Naive thymus-derived CD4-positive, alpha-beta T cell (primary cell): ENCODE measurements at regions of chr19 and their contacts with region 1.

Region 1: DNA sequence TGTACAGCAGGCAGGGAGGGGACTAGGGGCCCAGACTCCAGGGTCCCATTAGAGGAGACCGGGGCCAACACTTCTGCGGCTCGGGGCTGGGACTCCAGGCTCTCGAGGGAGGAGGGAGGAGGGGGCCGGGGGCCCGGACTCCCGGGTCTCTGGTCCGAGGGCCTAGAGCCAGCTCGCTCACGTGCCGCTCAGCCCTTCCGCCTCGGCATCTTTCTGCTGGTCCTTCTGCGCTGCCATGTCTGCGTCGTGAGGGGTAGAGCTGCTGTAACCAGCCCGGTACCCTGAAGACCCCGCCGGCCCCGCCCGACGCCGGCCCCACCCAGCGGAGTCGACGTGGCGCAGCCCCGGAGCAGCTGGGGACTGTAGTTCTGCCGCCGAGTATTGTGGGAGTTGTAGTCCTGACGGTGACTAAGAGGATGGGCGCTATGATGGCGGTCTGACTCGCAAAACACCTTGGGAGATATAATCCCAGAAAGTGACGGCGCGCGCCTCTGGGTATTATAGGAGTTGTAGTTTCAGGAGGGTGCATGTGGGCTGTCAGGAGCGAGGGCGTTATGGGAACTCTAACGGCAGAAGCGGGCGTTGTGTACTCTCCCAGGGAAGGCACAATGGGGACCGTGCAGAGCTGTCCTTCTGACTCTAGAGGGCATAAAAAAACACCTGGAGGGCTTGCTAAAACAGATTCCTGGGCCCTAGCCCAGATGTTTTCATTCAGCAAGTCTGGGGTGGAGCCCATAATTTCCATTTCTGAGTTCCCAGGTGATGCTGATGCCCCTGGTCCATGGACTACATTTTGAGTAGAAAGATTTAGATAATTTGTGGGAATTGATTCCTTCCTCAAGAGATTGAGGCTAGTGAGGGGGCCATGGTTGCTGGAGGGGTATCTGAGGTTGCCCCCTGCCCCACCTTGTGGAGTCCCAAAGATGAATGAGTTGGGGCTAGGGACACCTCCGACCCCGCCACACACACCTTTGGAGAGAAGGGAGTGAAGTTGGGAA is at the start of gene RABAC1:
- DNase-seq: peak; percentile 67 to 91 (median 86)
- ATAC-seq: peak; percentile 95
- H3K4me3 ChIP-seq: peak within 1 kb of the TSS; percentile 78
- H3K4me3 Mint-ChIP-seq: peak within 1 kb of the TSS; percentile 80 to 99 (median 91)
- H3K27ac ChIP-seq: peak within 1 kb of the TSS; percentile 81
- H3K27ac Mint-ChIP-seq: peak within 1 kb of the TSS; percentile 74 to 94 (median 90)
- H3K4me1 ChIP-seq: peaks cover 8 to 9% of the 10 kb centered on the region in 2 donors
- H3K4me1 Mint-ChIP-seq: peaks cover 17 to 22% (median 18%) of the 10 kb centered on the region in 7 donors
- H3K27me3 ChIP-seq: no peaks in the 10 kb centered on the region
- H3K27me3 Mint-ChIP-seq: no peaks in the 10 kb centered on the region
- total RNA-seq, gene RABAC1: 70.4 to 90.9 (median 78.1) TPM

Region 2: GRCh38 chr19:41945135-41945766 is 14.1 kb before region 1 on chr19:
- CTCF ChIA-PET with region 1: no interaction called
- POLR2A ChIA-PET with region 1: interaction called, 28 read pairs
- intact Hi-C with region 1: no loop called
- DNase-seq: peak; percentile 45 to 90 (median 82)
- ATAC-seq: peak; percentile 96
- H3K4me3 ChIP-seq: no peak overlapping the region
- H3K4me3 Mint-ChIP-seq: peak overlapping the region in 9 of 10 donors; percentile 39 to 77 (median 60)
- H3K27ac ChIP-seq: peak overlapping the region; percentile 57
- H3K27ac Mint-ChIP-seq: peak overlapping the region; percentile 84 to 100 (median 96)
- H3K4me1 ChIP-seq: peaks cover 23 to 41% of the 10 kb centered on the region in 2 donors
- H3K4me1 Mint-ChIP-seq: peaks cover 27 to 50% (median 41%) of the 10 kb centered on the region in 7 donors
- H3K27me3 ChIP-seq: no peaks in the 10 kb centered on the region
- H3K27me3 Mint-ChIP-seq: peaks cover 0 to 16% (median 4%) of the 10 kb centered on the region in 5 donors

Region 3: GRCh38 chr19:41993612-41994483 is 34.5 kb after region 1 on chr19 and contains the start of gene ATP1A3:
- CTCF ChIA-PET with region 1: no interaction called
- POLR2A ChIA-PET with region 1: no interaction called
- intact Hi-C with region 1: loop called (anchors 1 to 5 kb)
- DNase-seq: peak; percentile 21 to 69 (median 53)
- ATAC-seq: peak; percentile 86
- H3K4me3 ChIP-seq: peak within 1 kb of the TSS; percentile 74
- H3K4me3 Mint-ChIP-seq: peak within 1 kb of the TSS; percentile 79 to 92 (median 87)
- H3K27ac ChIP-seq: peak within 1 kb of the TSS; percentile 23
- H3K27ac Mint-ChIP-seq: peak within 1 kb of the TSS in 7 of 9 donors; percentile 24 to 82 (median 51)
- H3K4me1 ChIP-seq: peaks cover 6 to 12% of the 10 kb centered on the region in 2 donors
- H3K4me1 Mint-ChIP-seq: peaks cover 18 to 42% (median 38%) of the 10 kb centered on the region in 7 donors
- H3K27me3 ChIP-seq: peaks cover 3 to 16% of the 10 kb centered on the region in 2 donors
- H3K27me3 Mint-ChIP-seq: peaks cover 33 to 48% (median 35%) of the 10 kb centered on the region in 5 donors
- total RNA-seq, gene ATP1A3: 1.3 to 5.0 (median 2.9) TPM

Region 4: GRCh38 chr19:42032431-42032830 is 73.1 kb after region 1 on chr19:
- CTCF ChIA-PET with region 1: interaction called, 4 read pairs
- POLR2A ChIA-PET with region 1: interaction called, 4 read pairs
- intact Hi-C with region 1: loop called (anchors 1 to 2 kb)
- DNase-seq: no peak
- ATAC-seq: no peak
- H3K4me3 ChIP-seq: no peak overlapping the region
- H3K4me3 Mint-ChIP-seq: no peak overlapping the region
- H3K27ac ChIP-seq: no peak overlapping the region
- H3K27ac Mint-ChIP-seq: peak overlapping the region in 1 of 9 donors; percentile 88
- H3K4me1 ChIP-seq: no peaks in the 10 kb centered on the region
- H3K4me1 Mint-ChIP-seq: peaks cover 0 to 8% (median 0%) of the 10 kb centered on the region in 7 donors
- H3K27me3 ChIP-seq: no peaks in the 10 kb centered on the region
- H3K27me3 Mint-ChIP-seq: peaks cover 0 to 11% (median 6%) of the 10 kb centered on the region in 5 donors

Region 5: DNA sequence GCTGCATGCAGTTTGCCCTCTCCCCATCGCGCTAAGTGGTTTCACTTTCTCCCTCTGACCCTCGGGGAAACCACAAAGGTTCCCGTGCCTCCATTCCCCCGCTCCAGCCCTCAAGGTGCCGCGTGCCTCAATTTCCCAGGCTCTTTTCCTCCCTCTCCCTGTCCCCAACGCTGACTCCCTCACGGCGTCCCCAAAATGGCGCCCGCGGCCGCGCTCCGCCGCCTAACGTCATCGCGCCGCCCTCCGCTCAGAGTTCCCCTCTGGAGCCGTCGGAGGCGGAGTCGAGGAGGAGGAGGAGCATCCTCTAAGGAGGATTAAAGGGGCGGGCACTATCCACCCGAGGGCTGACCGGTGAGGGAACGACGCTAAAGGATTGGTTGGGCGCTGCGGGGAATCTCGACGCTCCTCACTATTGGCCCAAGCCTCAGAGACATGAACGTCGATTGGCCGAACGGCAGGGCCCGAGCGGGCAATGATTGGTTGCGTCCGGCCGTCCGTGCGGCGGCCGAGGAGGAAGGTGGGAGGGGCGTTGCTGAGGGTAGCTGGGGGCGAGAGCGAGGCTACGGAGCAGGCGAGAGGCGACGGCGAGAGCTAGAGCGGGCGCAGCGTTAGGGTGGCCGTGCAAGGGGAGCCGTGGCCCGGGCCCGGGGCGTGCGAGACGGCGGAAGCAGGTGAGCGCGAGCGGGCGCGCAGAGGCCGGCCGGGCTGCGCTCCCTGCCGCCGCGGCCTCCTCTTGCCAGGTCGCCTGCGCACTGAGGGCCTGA is 116.4 kb after region 1 on chr19 and contains the start of gene ZNF574:
- CTCF ChIA-PET with region 1: no interaction called
- POLR2A ChIA-PET with region 1: no interaction called
- intact Hi-C with region 1: loop called (anchors 1 to 2 kb)
- DNase-seq: peak; percentile 91 to 99 (median 98)
- ATAC-seq: peak; percentile 98
- H3K4me3 ChIP-seq: peak within 1 kb of the TSS; percentile 70
- H3K4me3 Mint-ChIP-seq: peak within 1 kb of the TSS; percentile 92 to 100 (median 98)
- H3K27ac ChIP-seq: peak within 1 kb of the TSS; percentile 97
- H3K27ac Mint-ChIP-seq: peak within 1 kb of the TSS; percentile 99 to 100 (median 100)
- H3K4me1 ChIP-seq: peaks cover 19 to 24% of the 10 kb centered on the region in 2 donors
- H3K4me1 Mint-ChIP-seq: peaks cover 26 to 44% (median 38%) of the 10 kb centered on the region in 7 donors
- H3K27me3 ChIP-seq: no peaks in the 10 kb centered on the region
- H3K27me3 Mint-ChIP-seq: peaks cover 0 to 13% (median 0%) of the 10 kb centered on the region in 5 donors
- total RNA-seq, gene ZNF574: 17.6 to 26.7 (median 20.9) TPM